ENCODE measurements at regions of chr12 and their contacts with region 1.

Region 1: DNA sequence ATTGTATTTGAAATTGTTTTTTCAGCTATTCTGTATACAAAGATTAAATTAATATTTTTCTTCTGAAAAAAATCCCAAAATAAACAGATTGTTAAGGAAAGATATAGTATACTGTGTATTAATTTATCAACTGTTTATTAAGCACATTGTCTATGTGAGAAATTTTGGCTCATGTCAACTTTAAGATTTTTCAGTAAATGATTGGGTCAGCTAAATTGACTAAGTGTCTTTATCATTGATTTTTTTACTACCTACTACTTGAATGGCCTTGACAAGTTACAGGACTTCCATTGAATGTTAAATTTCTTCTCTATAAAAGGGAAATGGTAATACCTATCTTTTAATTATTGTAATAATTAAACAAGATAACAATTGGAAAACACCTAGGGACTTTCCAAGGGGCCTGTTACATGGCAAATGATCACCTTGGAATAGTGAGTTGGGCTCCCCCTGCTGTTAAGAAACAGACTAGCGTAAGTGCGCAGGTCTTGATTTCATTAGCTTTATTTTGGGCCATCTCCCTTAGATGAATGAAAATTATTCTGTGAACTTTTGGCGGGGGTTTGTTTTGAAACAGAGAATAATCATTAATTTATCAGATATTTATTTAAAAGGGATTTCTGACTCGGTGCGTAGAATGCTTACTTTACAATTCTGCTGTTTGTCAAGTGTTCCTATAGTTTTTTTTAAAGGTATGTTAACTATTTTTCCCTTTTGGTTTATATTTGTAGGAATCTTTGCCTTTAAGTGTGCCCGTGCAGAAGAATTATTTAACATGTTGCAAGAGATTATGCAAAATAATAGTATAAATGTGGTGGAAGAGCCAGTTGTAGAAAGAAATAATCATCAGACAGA is 14.5 kb upstream of the CCT2 start:
- DNase-seq: no peak

Region 2: DNA sequence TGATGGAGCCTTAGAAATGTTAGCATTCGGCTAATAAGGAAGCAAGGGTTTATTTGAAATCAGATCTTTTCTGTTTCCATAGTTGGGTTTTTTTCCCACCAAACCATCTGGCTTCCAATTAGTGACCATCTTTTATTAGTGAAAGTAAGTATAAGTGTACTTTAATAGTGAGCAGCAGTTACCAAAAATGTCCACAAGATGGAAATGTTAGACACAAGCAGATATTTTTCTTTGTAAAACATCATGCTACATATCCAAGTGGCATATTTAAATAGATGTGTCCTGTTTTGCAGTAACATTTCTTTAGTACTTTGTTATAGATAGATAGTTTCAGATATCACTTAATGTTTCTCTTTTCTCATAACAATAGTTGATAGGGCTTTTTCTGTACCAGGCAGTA is 182.4 kb before region 1 on chr12:
- intact Hi-C with region 1: loop called (anchors 10 kb)
- DNase-seq: no peak

Region 3: DNA sequence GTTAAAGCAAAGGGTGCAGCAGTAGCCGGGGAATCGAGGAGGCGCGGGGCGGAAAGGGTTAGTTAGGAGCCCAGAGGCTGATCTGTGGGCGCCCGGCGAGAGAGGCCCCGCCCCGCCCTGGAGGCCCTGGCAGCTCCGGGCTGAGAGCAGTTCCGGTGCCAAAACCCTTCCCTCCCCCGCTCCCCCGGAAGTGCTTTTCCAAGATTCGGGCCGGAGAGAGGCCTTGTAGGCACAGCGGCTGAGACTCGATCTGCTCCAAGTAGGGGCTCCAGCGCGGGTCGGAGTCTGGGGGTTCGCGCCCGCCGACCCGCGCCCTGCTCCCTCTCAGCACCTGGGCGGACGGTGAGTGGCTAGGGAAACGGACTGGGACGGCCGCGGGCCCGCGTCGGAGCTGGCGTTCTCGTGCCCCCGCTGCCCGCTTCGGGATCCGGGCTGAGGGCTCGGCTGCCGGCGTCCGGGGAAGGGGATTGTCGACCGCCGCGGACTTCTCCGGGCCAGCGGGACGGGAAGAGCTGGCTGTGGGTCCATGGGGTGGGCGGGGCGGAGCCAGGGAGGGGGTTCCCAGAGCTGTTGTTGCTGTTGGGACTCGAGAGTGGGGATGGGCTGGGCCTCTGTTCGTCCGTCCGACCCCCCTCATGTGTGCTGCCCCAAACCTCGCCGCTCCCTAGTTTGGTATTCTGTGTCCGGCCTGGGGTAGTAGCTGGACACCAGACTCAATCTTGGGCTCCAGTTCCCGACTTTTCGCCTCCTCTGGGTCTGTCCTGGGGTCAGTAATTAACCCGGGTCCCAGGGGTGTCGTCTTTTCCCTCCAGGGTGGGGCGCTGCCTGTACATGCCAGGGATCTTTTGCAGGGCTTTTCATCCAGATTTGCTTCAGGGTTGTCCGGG is 100.3 kb before region 1 on chr12 and contains the start of gene FRS2:
- intact Hi-C with region 1: loop called in 1 of 2 experiments (anchors 5 kb)
- DNase-seq: peak; percentile 96
- total RNA-seq, gene FRS2: 35.0 to 39.1 TPM

Region 4: GRCh38 chr12:69623970-69624369 is 53.2 kb after region 1 on chr12:
- intact Hi-C with region 1: no loop called
- DNase-seq: no peak

Region 5: GRCh38 chr12:69698769-69699540 is 128.2 kb after region 1 on chr12 and contains the start of gene BEST3:
- intact Hi-C with region 1: no loop called
- DNase-seq: no peak
- total RNA-seq, gene BEST3: not detected

Region 6: DNA sequence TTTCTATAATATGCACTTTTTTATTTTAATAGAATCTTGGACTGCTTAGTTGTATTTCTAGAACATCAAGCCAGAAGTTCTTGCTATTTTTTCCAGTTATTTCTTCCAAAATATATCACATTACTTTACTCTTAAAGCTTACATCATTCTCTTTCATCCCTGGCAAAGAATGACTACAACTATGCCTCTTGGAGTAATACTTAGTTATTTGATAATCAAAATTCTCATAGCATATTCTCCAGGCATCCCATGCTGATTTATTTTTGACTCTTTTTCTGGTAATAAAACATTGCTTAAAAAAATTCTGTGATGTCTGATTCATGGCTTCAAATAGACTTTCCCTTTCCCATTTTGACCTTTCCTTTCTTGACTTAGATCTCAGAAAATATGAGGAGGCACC is 1705.8 kb after region 1 on chr12:
- intact Hi-C with region 1: loop called in 1 of 2 experiments (anchors 5 kb)
- DNase-seq: no peak

Measured in posterior vena cava (tissue), 2 donors.